ENCODE measurements at regions of chr16 and their contacts with region 1.

Region 1: GRCh38 chr16:10509534-10510025 is 70.8 kb downstream of the EMP2 start:
- DNase-seq: peak; percentile 75
- ATAC-seq: peak; percentile 76
- H3K4me3 Mint-ChIP-seq: no peak overlapping the region
- H3K27ac Mint-ChIP-seq: peak overlapping the region; percentile 69
- H3K4me1 Mint-ChIP-seq: peaks cover 28% of the 10 kb centered on the region
- H3K27me3 Mint-ChIP-seq: no peaks in the 10 kb centered on the region

Region 2: GRCh38 chr16:8567750-8568617 is 1941.6 kb before region 1 on chr16:
- CTCF ChIA-PET with region 1: no interaction called
- POLR2A ChIA-PET with region 1: no interaction called
- intact Hi-C with region 1: loop called in 1 of 2 experiments (anchors 5 kb)
- DNase-seq: peak; percentile 87
- ATAC-seq: peak; percentile 94
- H3K4me3 Mint-ChIP-seq: no peak overlapping the region
- H3K27ac Mint-ChIP-seq: no peak overlapping the region
- H3K4me1 Mint-ChIP-seq: peaks cover 4% of the 10 kb centered on the region
- H3K27me3 Mint-ChIP-seq: peaks cover 9% of the 10 kb centered on the region

Region 3: GRCh38 chr16:10266809-10267208 is 242.8 kb before region 1 on chr16:
- CTCF ChIA-PET with region 1: interaction called, 5 read pairs
- POLR2A ChIA-PET with region 1: no interaction called
- intact Hi-C with region 1: loop called (anchors 1 kb)
- DNase-seq: peak; percentile 71
- ATAC-seq: peak; percentile 98
- H3K4me3 Mint-ChIP-seq: no peak overlapping the region
- H3K27ac Mint-ChIP-seq: peak overlapping the region; percentile 63
- H3K4me1 Mint-ChIP-seq: peaks cover 12% of the 10 kb centered on the region
- H3K27me3 Mint-ChIP-seq: no peaks in the 10 kb centered on the region

Region 4: DNA sequence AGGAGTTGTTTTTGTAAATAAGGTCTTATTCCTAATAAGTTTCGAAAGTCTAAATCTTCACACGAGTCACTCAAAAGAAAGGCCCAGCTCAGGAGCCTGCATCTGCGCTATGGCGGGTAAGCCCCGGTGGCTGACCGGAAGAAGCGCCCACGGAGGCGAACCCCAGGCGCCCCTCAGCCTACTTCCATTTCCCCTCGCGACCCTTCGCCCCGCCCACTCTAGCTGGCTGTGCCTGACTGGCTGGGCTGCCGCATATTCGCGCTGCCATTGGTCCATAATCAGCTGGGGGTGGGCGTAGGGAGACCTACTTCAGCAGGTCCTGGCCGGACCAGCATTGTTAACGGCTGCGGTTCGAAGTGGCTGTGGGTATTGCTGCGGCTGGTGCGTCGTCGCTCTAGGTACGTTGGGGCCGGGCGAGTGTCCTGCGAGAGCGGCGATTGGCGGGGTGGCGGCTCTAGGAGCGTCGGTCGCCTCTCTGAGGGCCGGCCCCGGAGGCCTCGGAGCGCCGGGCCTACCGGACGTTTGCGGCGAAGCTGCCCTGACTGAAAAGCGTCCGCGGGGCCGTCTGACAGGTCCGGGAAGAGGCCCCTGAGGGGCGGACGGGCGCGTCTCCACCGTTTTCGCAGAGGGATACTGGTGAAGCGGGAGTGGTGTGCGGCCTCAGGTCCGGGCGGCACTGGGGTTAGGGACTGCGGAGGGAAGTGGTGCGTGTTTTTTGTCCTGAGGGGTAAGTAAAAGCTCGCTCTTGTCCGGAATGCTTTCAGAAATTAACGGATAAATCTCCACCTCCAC is 123.7 kb before region 1 on chr16 and contains the start of gene ATF7IP2:
- CTCF ChIA-PET with region 1: interaction called, 3 read pairs
- POLR2A ChIA-PET with region 1: no interaction called
- intact Hi-C with region 1: loop called in 1 of 2 experiments (anchors 2 kb)
- DNase-seq: peak; percentile 95
- ATAC-seq: peak; percentile 99
- H3K4me3 Mint-ChIP-seq: peak within 1 kb of the TSS; percentile 95
- H3K27ac Mint-ChIP-seq: peak within 1 kb of the TSS; percentile 98
- H3K4me1 Mint-ChIP-seq: peaks cover 43% of the 10 kb centered on the region
- H3K27me3 Mint-ChIP-seq: no peaks in the 10 kb centered on the region
- total RNA-seq, gene ATF7IP2: 20.0 to 21.9 TPM

Region 5: DNA sequence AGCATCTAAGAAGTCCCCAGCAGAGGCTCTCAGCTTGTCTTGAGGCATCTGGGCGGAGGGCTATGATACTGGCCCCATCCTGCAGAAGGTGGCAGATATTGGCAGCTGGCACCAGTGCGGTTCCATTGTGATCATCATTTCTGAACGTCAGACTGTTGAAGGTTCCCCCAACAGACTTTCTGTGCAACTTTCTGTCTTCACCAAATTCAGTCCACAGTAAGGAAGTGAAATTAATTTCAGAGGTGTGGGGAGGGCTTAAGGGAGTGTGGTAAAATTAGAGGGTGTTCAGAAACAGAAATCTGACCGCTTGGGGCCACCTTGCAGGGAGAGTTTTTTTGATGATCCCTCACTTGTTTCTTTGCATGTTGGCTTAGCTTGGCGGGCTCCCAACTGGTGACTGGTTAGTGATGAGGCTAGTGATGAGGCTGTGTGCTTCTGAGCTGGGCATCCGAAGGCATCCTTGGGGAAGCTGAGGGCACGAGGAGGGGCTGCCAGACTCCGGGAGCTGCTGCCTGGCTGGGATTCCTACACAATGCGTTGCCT is 367.3 kb after region 1 on chr16 and contains the start of gene CIITA:
- CTCF ChIA-PET with region 1: no interaction called
- POLR2A ChIA-PET with region 1: no interaction called
- intact Hi-C with region 1: loop called in 1 of 2 experiments (anchors 5 kb)
- DNase-seq: peak; percentile 77
- ATAC-seq: peak; percentile 50
- H3K4me3 Mint-ChIP-seq: peak within 1 kb of the TSS; percentile 70
- H3K27ac Mint-ChIP-seq: no peak within 1 kb of the TSS
- H3K4me1 Mint-ChIP-seq: peaks cover 62% of the 10 kb centered on the region
- H3K27me3 Mint-ChIP-seq: peaks cover 71% of the 10 kb centered on the region
- total RNA-seq, gene CIITA: 0.87 to 1.4 TPM

Measured in activated CD4-positive, alpha-beta T cell treated with anti-CD3 and anti-CD28 coated beads for 36 hours (primary cell).